ENCODE measurements at regions of chr6 and their contacts with region 1.

Region 1: GRCh38 chr6:132483779-132484679 is 28.9 kb downstream of the STX7 start:
- DNase-seq: peak in 1 of 2 donors; percentile 52
- ATAC-seq: peak in 7 of 8 donors; percentile 66 to 82 (median 79)
- H3K4me3 ChIP-seq: no peak overlapping the region
- H3K27ac ChIP-seq: no peak overlapping the region
- H3K4me1 ChIP-seq: peaks cover 0 to 39% (median 16%) of the 10 kb centered on the region in 9 donors
- H3K27me3 ChIP-seq: no peaks in the 10 kb centered on the region
- CTCF ChIP-seq: peak; percentile 60 to 84 (median 76)

Region 2: GRCh38 chr6:131909408-131910218 is 574.4 kb before region 1 on chr6:
- intact Hi-C with region 1: loop called in 2 of 10 experiments (anchors 10 kb)
- DNase-seq: peak in 1 of 2 donors; percentile 79
- ATAC-seq: peak in 6 of 8 donors; percentile 52 to 81 (median 71)
- H3K4me3 ChIP-seq: no peak overlapping the region
- H3K27ac ChIP-seq: no peak overlapping the region
- H3K4me1 ChIP-seq: no peaks in the 10 kb centered on the region
- H3K27me3 ChIP-seq: peaks cover 0 to 33% (median 14%) of the 10 kb centered on the region in 7 donors
- CTCF ChIP-seq: peak; percentile 69 to 95 (median 87)

Region 3: GRCh38 chr6:131923356-131923755 is 560.7 kb before region 1 on chr6:
- intact Hi-C with region 1: loop called in 5 of 10 experiments (anchors 5 to 10 kb)
- DNase-seq: peak in 1 of 2 donors; percentile 32
- ATAC-seq: no peak
- H3K4me3 ChIP-seq: no peak overlapping the region
- H3K27ac ChIP-seq: no peak overlapping the region
- H3K4me1 ChIP-seq: no peaks in the 10 kb centered on the region
- H3K27me3 ChIP-seq: peaks cover 0 to 7% (median 0%) of the 10 kb centered on the region in 7 donors
- CTCF ChIP-seq: peak in 8 of 9 donors; percentile 34 to 67 (median 54)

Region 4: GRCh38 chr6:132279592-132280139 is 204.4 kb before region 1 on chr6:
- intact Hi-C with region 1: loop called in 9 of 10 experiments (anchors 1 to 5 kb)
- DNase-seq: peak; percentile 63 to 67
- ATAC-seq: peak; percentile 53 to 84 (median 73)
- H3K4me3 ChIP-seq: peak overlapping the region in 7 of 10 donors; percentile 27 to 51 (median 48)
- H3K27ac ChIP-seq: no peak overlapping the region
- H3K4me1 ChIP-seq: no peaks in the 10 kb centered on the region
- H3K27me3 ChIP-seq: peaks cover 0 to 10% (median 7%) of the 10 kb centered on the region in 7 donors
- CTCF ChIP-seq: peak; percentile 78 to 95 (median 91)

Region 5: GRCh38 chr6:132286026-132287019 is 197.7 kb before region 1 on chr6:
- intact Hi-C with region 1: loop called in 4 of 10 experiments (anchors 5 kb)
- DNase-seq: no peak
- ATAC-seq: no peak
- H3K4me3 ChIP-seq: no peak overlapping the region
- H3K27ac ChIP-seq: no peak overlapping the region
- H3K4me1 ChIP-seq: no peaks in the 10 kb centered on the region
- H3K27me3 ChIP-seq: peaks cover 0 to 7% (median 0%) of the 10 kb centered on the region in 7 donors
- CTCF ChIP-seq: no peak

Region 6: DNA sequence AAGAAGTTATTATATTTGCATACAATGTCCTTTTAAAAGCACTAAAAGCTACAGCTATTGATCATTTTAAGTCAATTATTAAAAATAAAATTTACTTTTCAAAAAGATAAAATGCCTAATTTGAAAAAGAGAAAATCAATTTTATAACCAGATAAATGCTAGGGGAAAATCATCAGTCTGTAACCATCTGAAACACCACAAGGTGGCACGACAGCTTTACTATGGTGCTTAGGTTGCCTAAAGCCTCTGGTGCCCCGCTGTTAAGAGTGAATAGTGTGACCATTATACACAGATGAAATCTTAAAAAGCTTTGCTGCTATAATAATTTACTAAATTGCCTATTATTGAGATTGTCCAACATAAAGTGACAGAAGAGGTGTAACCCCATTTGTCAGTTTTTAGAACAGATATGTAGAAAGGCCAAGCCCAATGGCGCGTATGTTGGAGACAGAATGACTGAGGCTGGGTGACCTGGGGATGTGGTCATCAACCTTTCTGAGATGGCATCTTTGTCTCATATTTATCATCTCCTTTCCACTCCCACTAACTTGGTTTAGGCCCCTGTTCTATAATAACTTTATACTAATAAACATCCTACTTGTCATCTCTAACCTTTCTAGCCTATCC is 183.6 kb before region 1 on chr6:
- intact Hi-C with region 1: loop called in 7 of 10 experiments (anchors 2 to 5 kb)
- DNase-seq: peak in 1 of 2 donors; percentile 22
- ATAC-seq: peak in 5 of 8 donors; percentile 51 to 75 (median 59)
- H3K4me3 ChIP-seq: no peak overlapping the region
- H3K27ac ChIP-seq: no peak overlapping the region
- H3K4me1 ChIP-seq: no peaks in the 10 kb centered on the region
- H3K27me3 ChIP-seq: no peaks in the 10 kb centered on the region
- CTCF ChIP-seq: peak; percentile 19 to 74 (median 60)

Measured in heart right ventricle (tissue), 16 donors.